GM12878 (cell line): ENCODE measurements at regions of chr6 and their contacts with region 1.

Region 1: GRCh38 chr6:26122793-26123674 is 35.8 kb downstream of the HFE start:
- DNase-seq: peak; percentile 99
- ATAC-seq: peak; percentile 71
- H3K4me3 ChIP-seq: peak overlapping the region; percentile 65
- H3K27ac ChIP-seq: peak overlapping the region; percentile 95
- H3K4me1 ChIP-seq: peaks cover 3% of the 10 kb centered on the region; the same call in 1 of the 2 replicates
- H3K27me3 ChIP-seq: no peaks in the 10 kb centered on the region
- CTCF ChIP-seq: no peak
- EP300 ChIP-seq: peak; percentile 85 to 93; a peak in 3 of 4 replicates
- POLR2A ChIP-seq: peak; percentile 86
- RAD21 ChIP-seq: no peak

Region 2: DNA sequence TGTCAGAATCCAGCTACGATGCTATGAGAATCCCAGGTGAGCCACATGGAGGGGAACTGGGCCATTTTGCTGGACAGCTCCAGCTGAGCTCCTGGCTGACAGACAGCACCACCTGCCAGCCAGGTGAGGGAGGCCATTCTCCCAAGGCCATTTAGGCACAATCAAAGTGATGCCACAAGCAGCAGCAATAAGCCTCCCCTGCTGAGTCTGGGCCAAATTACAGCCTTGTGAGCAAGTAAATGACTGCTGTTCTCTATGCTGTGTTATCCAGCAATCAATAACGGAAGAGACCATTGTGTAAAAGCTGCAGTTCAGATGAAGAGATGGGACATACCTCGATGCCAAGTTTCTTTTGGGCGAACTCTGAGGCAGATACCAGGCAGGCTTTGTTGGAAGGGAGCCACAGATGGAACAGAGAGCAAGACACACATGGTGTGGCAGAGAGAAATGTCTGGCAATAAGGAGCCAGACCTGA is 485.0 kb before region 1 on chr6:
- CTCF ChIA-PET with region 1: no interaction called
- POLR2A ChIA-PET with region 1: no interaction called
- RAD21 ChIA-PET with region 1: no interaction called
- SMC1A ChIA-PET with region 1: no interaction called
- in situ Hi-C with region 1: no loop called
- intact Hi-C with region 1: no loop called
- DNase-seq: no peak
- ATAC-seq: no peak
- H3K4me3 ChIP-seq: no peak overlapping the region
- H3K27ac ChIP-seq: no peak overlapping the region
- H3K4me1 ChIP-seq: no peaks in the 10 kb centered on the region
- H3K27me3 ChIP-seq: peaks cover 0 to 6% of the 10 kb centered on the region in 2 experiments; a peak in 3 of 4 replicates
- CTCF ChIP-seq: 0 out of 6 replicates have a peak, but pooled peaks of 1 of the 3 experiments have one; percentile 3
- EP300 ChIP-seq: no peak
- POLR2A ChIP-seq: no peak
- RAD21 ChIP-seq: no peak

Region 3: GRCh38 chr6:26031595-26032339 is 91.3 kb before region 1 on chr6:
- CTCF ChIA-PET with region 1: no interaction called
- POLR2A ChIA-PET with region 1: interaction called, 21 read pairs
- RAD21 ChIA-PET with region 1: interaction called, 3 read pairs
- SMC1A ChIA-PET with region 1: interaction called, 7 read pairs
- in situ Hi-C with region 1: no loop called
- intact Hi-C with region 1: no loop called
- DNase-seq: peak; percentile 97
- ATAC-seq: peak; percentile 70
- H3K4me3 ChIP-seq: peak overlapping the region; percentile 75
- H3K27ac ChIP-seq: peak overlapping the region; percentile 95
- H3K4me1 ChIP-seq: peaks cover 9% of the 10 kb centered on the region; the same call in 1 of the 2 replicates
- H3K27me3 ChIP-seq: no peaks in the 10 kb centered on the region
- CTCF ChIP-seq: 0 out of 6 replicates have a peak, but pooled peaks of 1 of the 3 experiments have one; percentile 11
- EP300 ChIP-seq: peak in 1 of 2 experiments; percentile 10; a peak in 1 of 4 replicates
- POLR2A ChIP-seq: peak; percentile 96
- RAD21 ChIP-seq: no peak

Region 4: DNA sequence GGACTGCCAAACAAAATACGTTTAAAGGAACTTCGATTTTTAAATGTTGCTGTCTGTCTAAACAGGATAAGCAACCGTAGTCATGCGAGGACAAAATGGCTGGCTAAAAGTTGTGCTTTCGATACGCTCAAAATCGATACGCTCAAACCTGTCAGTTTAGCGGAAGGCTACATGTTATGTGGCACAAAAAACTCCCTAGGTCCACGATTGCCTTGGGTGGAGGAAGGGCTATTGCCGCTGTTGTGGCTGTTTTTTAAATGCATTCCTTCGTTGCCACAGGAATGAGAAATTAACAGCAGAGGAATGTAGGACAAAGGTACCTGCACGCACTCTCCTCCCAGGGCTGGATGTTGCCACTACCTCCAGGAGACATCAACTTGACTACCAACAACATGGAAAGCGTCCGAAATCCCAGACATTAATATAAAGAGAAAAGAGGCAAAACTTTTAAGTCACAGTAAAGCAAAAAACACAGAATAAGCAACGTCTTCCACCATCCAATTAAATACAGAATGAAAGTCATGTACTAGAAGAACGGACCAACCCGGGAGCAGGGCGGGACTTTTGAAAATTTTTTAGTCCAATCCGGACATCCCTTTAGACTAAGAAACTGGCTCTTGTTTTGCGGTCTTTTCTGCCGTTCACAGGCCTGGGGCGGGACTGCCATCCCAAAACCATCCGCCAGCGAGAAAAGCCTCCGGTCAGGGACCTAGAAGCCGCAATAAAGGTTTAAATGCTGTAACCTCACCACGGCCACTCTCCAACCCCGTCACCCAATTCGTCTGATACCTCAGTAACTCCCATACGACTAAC is 68.0 kb before region 1 on chr6:
- CTCF ChIA-PET with region 1: no interaction called
- POLR2A ChIA-PET with region 1: interaction called, 11 read pairs
- RAD21 ChIA-PET with region 1: interaction called, 4 read pairs
- SMC1A ChIA-PET with region 1: no interaction called
- in situ Hi-C with region 1: no loop called
- intact Hi-C with region 1: loop called (anchors 2 kb)
- DNase-seq: peak; percentile 88
- ATAC-seq: peak; percentile 71
- H3K4me3 ChIP-seq: peak overlapping the region; percentile 75
- H3K27ac ChIP-seq: peak overlapping the region; percentile 93
- H3K4me1 ChIP-seq: peaks cover 4% of the 10 kb centered on the region; the same call in 1 of the 2 replicates
- H3K27me3 ChIP-seq: no peaks in the 10 kb centered on the region
- CTCF ChIP-seq: peak in 1 of 3 experiments; percentile 26; a peak in 1 of 6 replicates
- EP300 ChIP-seq: no peak
- POLR2A ChIP-seq: peak; percentile 67
- RAD21 ChIP-seq: no peak

Region 5: DNA sequence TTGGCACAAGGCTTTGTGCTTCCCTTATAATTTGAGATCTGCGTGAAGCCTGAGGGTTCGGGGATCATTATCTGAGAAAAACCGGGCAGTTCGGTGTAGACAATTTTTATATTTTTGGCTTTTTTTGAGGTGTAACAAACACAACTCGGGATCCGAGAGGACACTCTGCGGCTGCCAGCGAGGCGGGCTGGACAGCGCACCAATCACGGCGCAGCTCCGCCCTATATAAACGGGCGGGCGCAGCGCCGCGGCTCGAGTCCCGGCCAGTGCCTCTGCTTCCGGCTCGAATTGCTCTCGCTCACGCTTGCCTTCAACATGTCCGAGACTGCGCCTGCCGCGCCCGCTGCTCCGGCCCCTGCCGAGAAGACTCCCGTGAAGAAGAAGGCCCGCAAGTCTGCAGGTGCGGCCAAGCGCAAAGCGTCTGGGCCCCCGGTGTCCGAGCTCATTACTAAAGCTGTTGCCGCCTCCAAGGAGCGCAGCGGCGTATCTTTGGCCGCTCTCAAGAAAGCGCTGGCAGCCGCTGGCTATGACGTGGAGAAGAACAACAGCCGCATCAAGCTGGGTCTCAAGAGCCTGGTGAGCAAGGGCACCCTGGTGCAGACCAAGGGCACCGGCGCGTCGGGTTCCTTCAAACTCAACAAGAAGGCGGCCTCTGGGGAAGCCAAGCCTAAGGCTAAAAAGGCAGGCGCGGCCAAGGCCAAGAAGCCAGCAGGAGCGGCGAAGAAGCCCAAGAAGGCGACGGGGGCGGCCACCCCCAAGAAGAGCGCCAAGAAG is 33.2 kb after region 1 on chr6:
- CTCF ChIA-PET with region 1: interaction called, 8 read pairs
- POLR2A ChIA-PET with region 1: interaction called, 119 read pairs
- RAD21 ChIA-PET with region 1: interaction called, 96 read pairs
- SMC1A ChIA-PET with region 1: interaction called, 34 read pairs
- in situ Hi-C with region 1: no loop called
- intact Hi-C with region 1: loop called (anchors 1 kb)
- DNase-seq: peak; percentile 90
- ATAC-seq: peak; percentile 65
- H3K4me3 ChIP-seq: peak overlapping the region; percentile 88
- H3K27ac ChIP-seq: peak overlapping the region; percentile 94
- H3K4me1 ChIP-seq: peaks cover 11% of the 10 kb centered on the region
- H3K27me3 ChIP-seq: no peaks in the 10 kb centered on the region
- CTCF ChIP-seq: no peak
- EP300 ChIP-seq: no peak; a peak in 1 of 4 replicates
- POLR2A ChIP-seq: peak; percentile 93
- RAD21 ChIP-seq: no peak

Region 6: DNA sequence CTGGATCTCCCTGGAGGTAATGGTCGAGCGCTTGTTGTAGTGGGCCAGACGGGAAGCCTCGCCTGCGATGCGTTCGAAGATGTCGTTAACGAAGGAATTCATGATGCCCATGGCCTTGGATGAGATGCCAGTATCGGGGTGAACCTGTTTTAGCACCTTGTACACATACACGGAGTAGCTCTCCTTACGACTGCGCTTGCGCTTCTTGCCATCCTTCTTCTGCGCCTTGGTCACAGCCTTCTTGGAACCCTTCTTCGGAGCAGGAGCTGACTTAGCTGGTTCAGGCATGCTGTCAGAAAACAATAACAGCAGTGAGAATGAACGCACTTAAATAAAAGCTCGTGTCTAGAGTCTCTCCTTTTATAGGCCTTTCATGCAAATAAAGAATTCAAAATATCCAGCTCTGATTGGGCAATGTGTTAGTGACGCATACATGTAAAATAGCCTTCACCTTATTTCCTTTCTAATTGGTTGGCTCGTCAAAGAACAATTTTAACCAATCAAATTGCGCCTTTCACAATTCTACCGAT is 93.4 kb after region 1 on chr6:
- CTCF ChIA-PET with region 1: no interaction called
- POLR2A ChIA-PET with region 1: interaction called, 18 read pairs
- RAD21 ChIA-PET with region 1: interaction called, 4 read pairs
- SMC1A ChIA-PET with region 1: interaction called, 4 read pairs
- in situ Hi-C with region 1: no loop called
- intact Hi-C with region 1: loop called (anchors 1 kb)
- DNase-seq: peak; percentile 100
- ATAC-seq: peak; percentile 77
- H3K4me3 ChIP-seq: peak overlapping the region; percentile 75
- H3K27ac ChIP-seq: peak overlapping the region; percentile 93
- H3K4me1 ChIP-seq: peaks cover 12% of the 10 kb centered on the region
- H3K27me3 ChIP-seq: no peaks in the 10 kb centered on the region
- CTCF ChIP-seq: no peak
- EP300 ChIP-seq: no peak
- POLR2A ChIP-seq: peak; percentile 84
- RAD21 ChIP-seq: 0 out of 2 replicates have a peak, but pooled peaks have one; percentile 3

Region 7: GRCh38 chr6:27809939-27810767 is 1687.1 kb after region 1 on chr6:
- CTCF ChIA-PET with region 1: no interaction called
- POLR2A ChIA-PET with region 1: interaction called, 3 read pairs
- RAD21 ChIA-PET with region 1: no interaction called
- SMC1A ChIA-PET with region 1: no interaction called
- in situ Hi-C with region 1: no loop called
- intact Hi-C with region 1: loop called (anchors 5 kb)
- DNase-seq: peak; percentile 98
- ATAC-seq: peak; percentile 43
- H3K4me3 ChIP-seq: peak overlapping the region; percentile 74
- H3K27ac ChIP-seq: peak overlapping the region; percentile 82
- H3K4me1 ChIP-seq: peaks cover 25% of the 10 kb centered on the region
- H3K27me3 ChIP-seq: no peaks in the 10 kb centered on the region
- CTCF ChIP-seq: peak in 1 of 3 experiments; percentile 19; a peak in 2 of 6 replicates
- EP300 ChIP-seq: no peak
- POLR2A ChIP-seq: peak; percentile 95
- RAD21 ChIP-seq: no peak